ENCODE measurements at regions of chr20 and their contacts with region 1.

Region 1: GRCh38 chr20:57514273-57514751 is 10.6 kb downstream of the CTCFL start:
- DNase-seq: peak; percentile 56
- ATAC-seq: no peak
- H3K4me3 Mint-ChIP-seq: no peak overlapping the region
- H3K27ac Mint-ChIP-seq: no peak overlapping the region
- H3K4me1 Mint-ChIP-seq: no peaks in the 10 kb centered on the region
- H3K27me3 Mint-ChIP-seq: peaks cover 7% of the 10 kb centered on the region

Region 2: DNA sequence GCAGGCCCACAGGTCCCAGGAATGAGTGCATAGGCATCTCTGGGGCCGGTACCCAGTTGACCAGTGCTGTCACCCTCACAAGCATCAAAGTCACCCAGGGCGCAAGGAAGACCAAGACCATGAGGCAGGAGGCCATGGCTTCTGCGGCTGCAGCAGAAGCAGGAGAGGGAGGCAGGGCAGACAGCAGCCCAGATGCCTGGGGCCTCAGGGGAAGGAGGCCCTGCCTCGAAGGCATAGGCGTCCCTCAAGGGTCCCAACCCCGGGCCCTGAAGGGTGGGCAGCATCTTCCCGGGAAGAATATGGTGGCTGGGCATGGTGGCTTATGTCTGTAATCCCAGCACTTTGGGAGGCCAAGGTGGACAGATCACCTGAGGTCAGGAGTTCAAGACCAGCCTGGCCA is 986.8 kb before region 1 on chr20:
- CTCF ChIA-PET with region 1: no interaction called
- POLR2A ChIA-PET with region 1: no interaction called
- intact Hi-C with region 1: no loop called
- DNase-seq: no peak
- ATAC-seq: no peak
- H3K4me3 Mint-ChIP-seq: no peak overlapping the region
- H3K27ac Mint-ChIP-seq: no peak overlapping the region
- H3K4me1 Mint-ChIP-seq: peaks cover 6% of the 10 kb centered on the region
- H3K27me3 Mint-ChIP-seq: no peaks in the 10 kb centered on the region

Region 3: GRCh38 chr20:58087193-58087858 is 573.0 kb after region 1 on chr20:
- CTCF ChIA-PET with region 1: no interaction called
- POLR2A ChIA-PET with region 1: no interaction called
- intact Hi-C with region 1: loop called in 1 of 2 experiments (anchors 10 kb)
- DNase-seq: peak; percentile 47
- ATAC-seq: no peak
- H3K4me3 Mint-ChIP-seq: no peak overlapping the region
- H3K27ac Mint-ChIP-seq: no peak overlapping the region
- H3K4me1 Mint-ChIP-seq: no peaks in the 10 kb centered on the region
- H3K27me3 Mint-ChIP-seq: peaks cover 10% of the 10 kb centered on the region

Region 4: DNA sequence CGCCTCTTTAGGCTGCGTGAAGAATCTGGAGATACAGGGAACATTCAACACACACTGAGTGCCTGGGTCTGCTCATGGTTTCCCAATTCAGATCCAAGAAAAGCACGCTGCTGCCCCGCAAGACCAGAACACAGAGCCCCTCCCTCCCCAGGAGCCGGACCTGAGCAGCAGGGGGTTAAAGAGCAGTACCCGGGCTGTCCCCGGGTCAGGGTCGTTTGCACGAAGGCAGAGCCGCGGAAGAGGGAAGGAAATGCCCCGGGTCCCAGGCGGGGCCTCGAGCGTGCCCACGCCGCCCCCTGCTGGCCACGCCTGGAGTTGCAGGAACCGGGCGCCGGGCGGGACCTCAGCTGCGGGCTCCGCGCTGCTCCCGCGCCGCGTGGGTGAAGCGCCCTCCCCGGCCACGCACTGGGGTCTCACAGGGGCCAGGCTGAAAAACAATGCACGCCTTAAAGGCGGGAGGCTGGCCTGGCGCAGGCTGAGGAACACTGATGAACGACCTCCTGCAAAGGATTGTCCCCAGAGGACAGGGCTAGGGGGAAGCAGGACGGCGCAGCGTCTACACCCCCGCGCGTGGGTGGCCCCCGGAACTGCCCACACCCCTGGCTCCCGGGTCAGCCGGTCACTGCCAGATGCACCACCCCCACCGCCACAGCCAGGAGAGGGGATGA is 665.3 kb after region 1 on chr20:
- CTCF ChIA-PET with region 1: no interaction called
- POLR2A ChIA-PET with region 1: no interaction called
- intact Hi-C with region 1: loop called in 1 of 2 experiments (anchors 10 kb)
- DNase-seq: peak; percentile 79
- ATAC-seq: peak; percentile 94
- H3K4me3 Mint-ChIP-seq: peak overlapping the region; percentile 18
- H3K27ac Mint-ChIP-seq: no peak overlapping the region
- H3K4me1 Mint-ChIP-seq: peaks cover 10% of the 10 kb centered on the region
- H3K27me3 Mint-ChIP-seq: peaks cover 13% of the 10 kb centered on the region

Region 5: GRCh38 chr20:58209652-58210397 is 695.5 kb after region 1 on chr20:
- CTCF ChIA-PET with region 1: interaction called, 4 read pairs
- POLR2A ChIA-PET with region 1: no interaction called
- intact Hi-C with region 1: loop called (anchors 5 to 10 kb)
- DNase-seq: peak; percentile 94
- ATAC-seq: peak; percentile 85
- H3K4me3 Mint-ChIP-seq: no peak overlapping the region
- H3K27ac Mint-ChIP-seq: peak overlapping the region; percentile 6
- H3K4me1 Mint-ChIP-seq: no peaks in the 10 kb centered on the region
- H3K27me3 Mint-ChIP-seq: peaks cover 10% of the 10 kb centered on the region